PC-9 (cell line): ENCODE measurements at regions of chr2 and their contacts with region 1.

Region 1: DNA sequence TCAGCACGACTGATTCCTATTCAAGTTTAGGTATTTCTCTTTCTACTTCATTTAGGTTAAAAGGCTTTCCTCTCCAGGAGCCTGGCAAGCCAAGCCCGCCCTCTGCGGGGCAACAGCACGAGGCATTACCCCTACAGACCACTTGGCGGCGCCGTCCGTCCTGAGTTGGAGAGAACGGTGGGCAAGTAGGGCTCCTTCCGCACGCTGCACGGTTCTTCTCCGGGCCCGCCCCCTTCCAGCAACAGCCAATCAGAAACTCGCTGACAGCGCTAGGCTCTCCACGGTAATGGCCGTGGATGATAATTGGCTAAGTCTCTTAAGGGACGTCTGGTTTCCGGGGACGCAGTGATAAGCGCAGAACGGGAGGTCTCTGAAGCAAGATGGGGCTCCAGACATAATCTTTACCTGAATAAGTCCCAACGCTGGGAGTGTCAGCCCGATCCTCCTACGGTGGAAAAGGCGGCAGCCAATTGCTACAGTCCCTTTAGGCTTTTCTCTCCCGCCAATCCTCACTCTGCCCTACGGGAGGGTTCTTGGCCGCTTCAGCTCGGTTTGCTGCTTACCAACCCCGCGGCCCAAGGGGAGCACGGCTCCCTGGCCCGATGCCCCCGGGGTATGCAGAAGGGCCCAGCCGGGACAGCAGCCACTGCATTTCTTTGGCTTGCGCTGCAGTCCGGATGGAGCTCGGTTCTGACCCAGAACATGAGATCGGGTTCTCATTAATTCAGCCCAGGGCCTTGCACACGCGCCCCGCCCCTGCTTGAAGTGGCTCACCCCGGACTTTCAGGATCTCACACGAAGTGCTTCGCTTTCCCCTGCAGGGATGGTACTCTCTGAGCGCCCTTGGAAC is 206.9 kb upstream of the PKDCC start:
- DNase-seq: peak; percentile 97
- H3K4me3 ChIP-seq: peak overlapping the region; percentile 74
- H3K27ac ChIP-seq: no peak overlapping the region
- H3K4me1 ChIP-seq: peaks cover 13% of the 10 kb centered on the region
- H3K27me3 ChIP-seq: no peaks in the 10 kb centered on the region
- CTCF ChIP-seq: peak; percentile 99

Region 2: GRCh38 chr2:42010810-42011209 is 169.9 kb after region 1 on chr2:
- CTCF ChIA-PET with region 1: no interaction called
- POLR2A ChIA-PET with region 1: no interaction called
- intact Hi-C with region 1: no loop called
- DNase-seq: peak; percentile 36 to 76
- H3K4me3 ChIP-seq: no peak overlapping the region
- H3K27ac ChIP-seq: no peak overlapping the region
- H3K4me1 ChIP-seq: peaks cover 11% of the 10 kb centered on the region; the same call in 1 of the 2 replicates
- H3K27me3 ChIP-seq: no peaks in the 10 kb centered on the region
- CTCF ChIP-seq: no peak

Region 3: DNA sequence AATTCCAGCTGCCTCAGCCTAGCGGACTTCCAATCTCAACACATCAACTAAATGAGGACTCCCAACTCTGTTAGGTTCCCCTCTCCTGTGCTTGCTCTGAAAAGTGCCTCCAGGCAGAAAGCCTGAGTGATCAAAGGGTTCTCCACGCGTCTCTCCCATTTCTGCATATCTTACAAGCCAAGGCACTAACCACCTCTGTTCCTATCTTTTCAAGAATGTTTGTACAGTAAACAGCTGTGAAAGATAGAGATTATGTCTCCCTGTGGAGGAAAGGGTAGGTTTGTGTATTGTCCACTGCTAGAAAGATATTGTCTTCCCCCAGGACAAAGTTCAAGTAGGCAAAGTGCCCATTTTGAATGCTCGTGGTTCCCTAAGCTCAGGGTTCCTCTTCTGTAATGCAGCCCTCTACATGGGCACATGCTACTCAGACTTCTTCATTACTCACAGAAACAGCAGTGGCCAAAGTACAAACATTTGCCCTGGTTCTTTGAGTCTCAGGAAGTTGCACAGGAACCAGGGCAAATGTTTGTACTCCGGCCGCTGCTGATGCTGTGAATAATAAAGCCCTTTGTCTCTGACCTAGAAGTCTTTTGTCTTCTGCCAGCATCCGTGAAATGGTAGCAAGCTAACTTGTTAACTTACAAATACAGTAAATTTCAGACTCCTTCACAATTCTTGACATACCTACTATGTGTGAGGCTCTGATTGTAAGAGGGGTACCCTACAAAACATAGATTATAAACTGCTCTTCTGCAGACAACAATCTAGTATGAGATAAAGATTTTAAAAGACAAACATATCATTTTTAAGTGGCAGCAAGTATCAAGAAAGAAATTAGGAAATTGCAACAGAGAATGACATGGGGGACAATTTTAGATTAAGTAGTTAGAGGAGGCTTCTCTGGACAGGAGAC is 251.4 kb after region 1 on chr2:
- CTCF ChIA-PET with region 1: no interaction called
- POLR2A ChIA-PET with region 1: no interaction called
- intact Hi-C with region 1: no loop called
- DNase-seq: no peak
- H3K4me3 ChIP-seq: no peak overlapping the region
- H3K27ac ChIP-seq: no peak overlapping the region
- H3K4me1 ChIP-seq: no peaks in the 10 kb centered on the region
- H3K27me3 ChIP-seq: no peaks in the 10 kb centered on the region
- CTCF ChIP-seq: no peak

Region 4: DNA sequence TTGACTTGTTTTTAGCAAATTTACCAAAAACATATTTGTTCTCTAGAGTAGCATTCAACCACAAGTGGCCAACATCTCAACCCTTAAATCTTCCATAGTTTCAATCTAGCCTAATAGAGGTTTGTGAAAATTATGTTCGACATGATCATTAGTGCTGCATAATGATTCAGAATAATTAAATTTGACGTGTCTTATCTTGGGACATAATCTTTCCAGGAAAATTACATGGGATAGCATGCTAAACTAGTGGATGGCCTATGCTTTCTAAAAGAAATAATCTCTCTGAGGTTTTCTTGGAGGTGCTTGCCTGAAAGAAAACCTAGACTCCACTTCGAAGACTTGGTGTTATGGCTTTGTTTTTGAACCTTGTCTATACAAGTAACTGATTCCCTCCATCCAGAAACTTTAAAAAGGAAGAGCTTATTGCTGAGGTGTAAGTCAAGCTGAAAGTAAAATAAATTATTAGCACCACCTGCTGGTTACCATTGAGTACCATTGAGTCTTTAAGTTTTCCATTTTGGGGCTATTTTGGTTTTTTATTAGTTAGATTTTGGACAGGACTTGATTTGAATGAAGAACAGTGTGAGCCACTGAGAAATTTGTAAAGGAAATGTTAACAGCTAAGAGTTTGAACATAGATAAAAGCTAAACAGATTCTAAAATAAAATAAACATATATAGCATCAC is 487.4 kb after region 1 on chr2:
- CTCF ChIA-PET with region 1: no interaction called
- POLR2A ChIA-PET with region 1: no interaction called
- intact Hi-C with region 1: loop called (anchors 5 kb)
- DNase-seq: no peak
- H3K4me3 ChIP-seq: no peak overlapping the region
- H3K27ac ChIP-seq: no peak overlapping the region
- H3K4me1 ChIP-seq: no peaks in the 10 kb centered on the region
- H3K27me3 ChIP-seq: no peaks in the 10 kb centered on the region
- CTCF ChIP-seq: peak; percentile 85